SK-N-SH (cell line): ENCODE measurements at regions of chr16 and their contacts with region 1.

Region 1: GRCh38 chr16:68377670-68378393 is 67.0 kb downstream of the PRMT7 start:
- DNase-seq: peak; percentile 89
- H3K4me3 ChIP-seq: no peak overlapping the region
- H3K27ac ChIP-seq: peak overlapping the region in 1 of 2 experiments; percentile 74; a peak in 2 of 4 replicates
- H3K4me1 ChIP-seq: peaks cover 0 to 24% of the 10 kb centered on the region in 2 experiments; a peak in 1 of 4 replicates
- H3K27me3 ChIP-seq: no peaks in the 10 kb centered on the region
- CTCF ChIP-seq: no peak
- EP300 ChIP-seq: no peak; a peak in 1 of 4 replicates
- RAD21 ChIP-seq: peak; percentile 3; the same call in 1 of the 2 replicates

Region 2: GRCh38 chr16:68367030-68367429 is 10.8 kb before region 1 on chr16:
- CTCF ChIA-PET with region 1: interaction called, 12 read pairs
- POLR2A ChIA-PET with region 1: interaction called, 3 read pairs
- DNase-seq: peak; percentile 74
- H3K4me3 ChIP-seq: no peak overlapping the region
- H3K27ac ChIP-seq: no peak overlapping the region
- H3K4me1 ChIP-seq: peaks cover 0 to 54% of the 10 kb centered on the region in 2 experiments; a peak in 2 of 4 replicates
- H3K27me3 ChIP-seq: no peaks in the 10 kb centered on the region
- CTCF ChIP-seq: peak; percentile 54
- EP300 ChIP-seq: no peak
- RAD21 ChIP-seq: peak; percentile 51

Region 3: GRCh38 chr16:68470461-68471150 is 92.8 kb after region 1 on chr16:
- CTCF ChIA-PET with region 1: no interaction called
- POLR2A ChIA-PET with region 1: no interaction called
- DNase-seq: no peak
- H3K4me3 ChIP-seq: no peak overlapping the region
- H3K27ac ChIP-seq: no peak overlapping the region
- H3K4me1 ChIP-seq: peaks cover 0 to 7% of the 10 kb centered on the region in 2 experiments; a peak in 1 of 4 replicates
- H3K27me3 ChIP-seq: no peaks in the 10 kb centered on the region
- CTCF ChIP-seq: no peak
- EP300 ChIP-seq: no peak
- RAD21 ChIP-seq: no peak